Heart right ventricle (tissue), 16 donors: ENCODE measurements at regions of chr21 and their contacts with region 1.

Region 1: GRCh38 chr21:42737951-42738590 is 84.7 kb downstream of the PDE9A start:
- DNase-seq: peak; percentile 50 to 67
- ATAC-seq: peak; percentile 81 to 92 (median 90)
- H3K4me3 ChIP-seq: peak overlapping the region in 2 of 10 donors; percentile 5 to 20
- H3K27ac ChIP-seq: peak overlapping the region; percentile 3 to 90 (median 79)
- H3K4me1 ChIP-seq: peaks cover 0 to 52% (median 40%) of the 10 kb centered on the region in 9 donors
- H3K27me3 ChIP-seq: peaks cover 0 to 4% (median 0%) of the 10 kb centered on the region in 7 donors
- CTCF ChIP-seq: no peak

Region 2: DNA sequence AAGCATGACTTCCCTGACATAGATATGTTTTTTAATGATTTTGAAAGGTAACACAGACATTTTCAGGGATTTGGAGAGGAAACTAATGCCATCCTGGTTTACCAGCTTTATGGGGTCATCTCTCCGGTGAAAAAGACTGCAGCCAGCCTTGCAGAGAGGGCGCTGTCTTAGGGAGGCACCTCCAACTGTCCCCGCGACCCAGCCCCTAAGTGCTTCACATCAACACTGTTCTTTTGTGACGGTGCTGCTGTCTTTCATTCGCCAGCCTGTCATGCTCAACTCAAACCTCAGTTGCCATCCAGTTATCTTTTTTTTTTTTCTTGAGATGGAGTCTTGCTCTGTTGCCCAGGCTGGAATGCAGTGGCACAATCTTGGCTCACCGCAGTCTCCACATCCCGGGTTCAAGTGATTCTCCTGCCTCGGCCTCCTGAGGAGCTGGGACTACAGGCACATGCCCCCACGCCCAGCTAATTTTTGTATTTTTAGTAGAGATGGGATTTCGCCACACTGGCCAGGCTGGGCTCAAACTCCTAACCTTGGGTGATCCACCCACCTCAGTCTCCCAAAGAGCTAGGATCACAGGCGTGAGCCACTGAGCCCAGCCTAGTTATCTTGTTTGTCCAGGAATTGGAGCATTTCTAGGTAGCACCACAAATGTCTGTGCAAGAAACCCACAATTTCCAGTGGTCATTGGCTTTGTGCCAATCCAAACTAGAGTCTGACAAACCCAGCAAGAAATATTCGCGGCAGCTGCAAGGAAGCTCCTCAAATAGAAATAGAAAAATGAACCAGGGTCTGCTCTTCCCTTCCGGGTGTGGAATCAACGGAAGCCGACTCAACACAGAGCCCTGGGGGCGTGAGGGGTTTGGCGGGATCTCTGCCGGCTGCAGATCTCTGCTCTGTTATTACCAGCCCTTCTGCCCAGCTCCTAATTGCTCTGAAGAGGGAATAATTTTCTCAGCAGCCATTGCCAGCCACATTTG is 60.4 kb before region 1 on chr21:
- intact Hi-C with region 1: loop called in 1 of 10 experiments (anchors 1 kb)
- DNase-seq: peak in 1 of 2 donors; percentile 34
- ATAC-seq: peak in 1 of 8 donors; percentile 2
- H3K4me3 ChIP-seq: no peak overlapping the region
- H3K27ac ChIP-seq: peak overlapping the region in 3 of 10 donors; percentile 34 to 51 (median 40)
- H3K4me1 ChIP-seq: peaks cover 0 to 41% (median 22%) of the 10 kb centered on the region in 9 donors
- H3K27me3 ChIP-seq: peaks cover 0 to 26% (median 4%) of the 10 kb centered on the region in 7 donors
- CTCF ChIP-seq: no peak